Endothelial cell of umbilical vein (primary cell): ENCODE measurements at regions of chr15 and their contacts with region 1.

Region 1: DNA sequence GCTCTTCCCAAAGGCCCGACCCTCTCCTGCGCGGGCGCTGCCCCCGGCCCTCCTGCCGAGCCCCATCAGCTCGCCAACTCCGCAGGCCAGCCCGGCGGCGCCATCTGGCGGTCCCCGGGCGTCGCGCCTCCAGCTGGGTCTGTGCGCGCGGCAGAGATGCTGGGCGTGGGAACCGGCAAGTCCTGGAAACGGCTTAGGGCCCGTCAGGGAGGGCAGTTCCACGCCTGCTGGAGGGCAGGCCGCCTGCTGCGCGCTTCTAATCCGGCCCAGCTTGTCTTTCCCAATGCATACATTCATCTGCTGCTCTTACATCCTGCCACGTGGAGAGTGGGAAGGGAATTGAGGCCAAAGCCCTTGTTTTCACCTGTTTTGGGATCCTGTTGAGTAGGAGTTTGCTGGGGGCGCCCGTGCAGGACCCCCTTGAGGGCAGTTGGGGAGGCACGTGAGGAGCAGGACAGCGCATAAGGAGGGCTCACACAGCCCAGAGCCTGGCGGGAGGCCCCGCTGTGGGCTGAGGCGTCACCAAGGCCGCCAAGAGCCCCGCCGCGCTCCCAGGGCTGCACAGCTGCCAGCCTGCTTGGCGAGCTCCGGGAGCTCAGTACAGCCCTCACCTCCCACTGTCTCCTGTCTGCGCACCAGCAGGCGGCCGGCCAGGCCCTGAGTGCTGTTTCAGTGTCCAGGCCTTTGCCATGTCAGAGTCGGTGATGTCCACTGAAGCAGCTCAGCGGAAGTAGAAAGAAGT is 165.6 kb downstream of the NSMCE3 start:
- DNase-seq: peak; percentile 79
- H3K4me3 ChIP-seq: peak overlapping the region in 2 of 3 experiments; percentile 18 to 32
- H3K27ac ChIP-seq: no peak overlapping the region
- H3K4me1 ChIP-seq: no peaks in the 10 kb centered on the region
- H3K27me3 ChIP-seq: no peaks in the 10 kb centered on the region
- CTCF ChIP-seq: peak; percentile 93 to 96
- POLR2A ChIP-seq: no peak

Region 2: GRCh38 chr15:28123408-28124023 is 980.5 kb before region 1 on chr15:
- CTCF ChIA-PET with region 1: interaction called, 11 read pairs
- POLR2A ChIA-PET with region 1: no interaction called
- dilution Hi-C with region 1: no loop called
- intact Hi-C with region 1: no loop called
- DNase-seq: peak; percentile 75
- H3K4me3 ChIP-seq: no peak overlapping the region
- H3K27ac ChIP-seq: no peak overlapping the region
- H3K4me1 ChIP-seq: no peaks in the 10 kb centered on the region
- H3K27me3 ChIP-seq: no peaks in the 10 kb centered on the region
- CTCF ChIP-seq: peak; percentile 69 to 71
- POLR2A ChIP-seq: no peak

Region 3: DNA sequence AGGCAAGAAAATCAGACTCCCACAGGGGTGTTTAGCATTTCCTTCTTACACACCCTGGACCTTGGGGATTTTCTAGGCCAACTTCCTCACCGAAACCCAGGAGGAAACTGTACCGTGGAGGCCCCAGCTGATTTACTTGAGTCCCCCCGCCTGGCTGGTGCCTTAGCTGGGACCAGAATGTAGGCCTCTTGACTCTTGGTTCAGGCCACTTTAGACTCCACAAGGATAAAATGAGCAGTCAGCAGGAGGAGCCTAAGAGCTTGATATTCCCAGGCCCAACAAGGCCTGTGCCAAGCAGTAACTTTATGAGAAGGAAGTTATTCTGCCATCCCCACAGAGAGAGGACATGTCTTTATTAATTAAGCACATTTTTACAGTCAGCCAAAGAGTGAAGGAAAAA is 222.8 kb before region 1 on chr15:
- CTCF ChIA-PET with region 1: no interaction called
- POLR2A ChIA-PET with region 1: no interaction called
- dilution Hi-C with region 1: no loop called
- intact Hi-C with region 1: loop called (anchors 5 kb)
- DNase-seq: no peak
- H3K4me3 ChIP-seq: no peak overlapping the region
- H3K27ac ChIP-seq: no peak overlapping the region
- H3K4me1 ChIP-seq: no peaks in the 10 kb centered on the region
- H3K27me3 ChIP-seq: peaks cover 0 to 2% of the 10 kb centered on the region in 2 experiments
- CTCF ChIP-seq: no peak
- POLR2A ChIP-seq: no peak

Region 4: DNA sequence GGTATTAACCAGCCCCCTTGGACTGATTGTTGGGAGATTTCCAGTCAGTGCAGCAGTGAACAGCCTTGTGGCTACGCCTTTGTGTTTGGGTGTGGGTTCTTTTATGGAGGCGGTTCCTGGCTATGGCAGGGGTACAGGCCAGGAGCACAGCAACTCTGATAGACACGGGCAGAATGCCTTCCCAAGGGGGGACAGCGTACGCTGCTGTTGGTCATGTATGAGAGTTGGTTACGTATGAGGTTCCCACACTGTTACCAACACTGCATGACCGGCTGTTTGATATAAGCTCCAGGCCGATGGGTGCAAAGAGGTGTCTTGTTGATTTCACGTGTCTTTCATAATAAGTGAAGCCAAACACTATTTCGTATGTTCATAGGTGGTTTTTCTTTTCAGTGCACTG is 22.2 kb before region 1 on chr15:
- CTCF ChIA-PET with region 1: interaction called, 11 read pairs
- POLR2A ChIA-PET with region 1: no interaction called
- dilution Hi-C with region 1: no loop called
- intact Hi-C with region 1: no loop called
- DNase-seq: no peak
- H3K4me3 ChIP-seq: no peak overlapping the region
- H3K27ac ChIP-seq: no peak overlapping the region
- H3K4me1 ChIP-seq: no peaks in the 10 kb centered on the region
- H3K27me3 ChIP-seq: no peaks in the 10 kb centered on the region
- CTCF ChIP-seq: no peak
- POLR2A ChIP-seq: no peak

Region 5: DNA sequence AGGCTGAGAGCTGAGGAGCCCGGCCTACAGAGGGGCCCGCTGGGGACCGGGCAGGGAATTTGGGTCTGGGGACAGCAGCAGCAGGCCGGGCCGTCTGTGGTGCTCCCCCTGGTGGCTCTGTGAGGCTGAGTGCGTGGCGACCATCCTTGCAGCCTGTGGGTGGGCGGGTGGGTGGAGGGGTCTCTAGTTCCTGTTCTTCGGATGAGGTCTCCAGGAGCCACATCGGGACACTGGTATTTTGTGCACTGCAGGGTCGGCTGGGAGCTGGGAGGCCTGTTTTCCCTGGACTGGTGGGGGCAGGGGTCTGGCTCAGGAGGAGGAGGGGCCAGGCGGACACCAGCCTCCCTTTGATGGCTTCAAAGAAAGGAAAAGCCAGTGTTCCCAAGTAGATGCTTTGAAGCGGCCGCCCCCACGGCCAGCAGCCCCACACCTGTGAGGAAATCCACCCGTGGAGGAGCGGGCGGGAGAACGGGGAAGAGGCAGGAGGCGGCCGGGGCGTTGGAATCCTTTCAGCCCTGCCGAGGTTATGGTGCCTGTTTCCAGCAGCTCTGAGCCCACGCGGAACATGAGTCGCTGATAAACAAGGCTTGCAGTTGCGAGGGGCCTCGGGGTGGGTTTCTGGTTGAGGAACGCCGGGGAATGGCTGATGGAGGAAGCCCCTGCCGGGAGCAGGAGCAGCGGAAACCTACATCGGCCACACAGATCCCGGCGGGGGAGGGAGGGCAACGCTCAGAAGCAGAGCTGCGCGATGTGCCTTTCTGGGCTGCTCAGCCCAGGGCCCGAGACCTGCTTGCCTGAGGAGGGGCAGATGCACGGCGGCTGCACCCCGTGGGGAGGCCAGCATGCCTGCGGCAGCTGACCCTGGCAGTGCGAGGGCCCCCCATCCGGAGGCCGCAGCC is 11.3 kb after region 1 on chr15:
- CTCF ChIA-PET with region 1: interaction called, 49 read pairs
- POLR2A ChIA-PET with region 1: no interaction called
- dilution Hi-C with region 1: no loop called
- intact Hi-C with region 1: no loop called
- DNase-seq: peak; percentile 17
- H3K4me3 ChIP-seq: peak overlapping the region in 2 of 3 experiments; percentile 3 to 34
- H3K27ac ChIP-seq: no peak overlapping the region
- H3K4me1 ChIP-seq: no peaks in the 10 kb centered on the region
- H3K27me3 ChIP-seq: no peaks in the 10 kb centered on the region
- CTCF ChIP-seq: peak; percentile 21 to 78
- POLR2A ChIP-seq: no peak

Region 6: GRCh38 chr15:29131840-29132420 is 27.9 kb after region 1 on chr15:
- CTCF ChIA-PET with region 1: interaction called, 14 read pairs
- POLR2A ChIA-PET with region 1: no interaction called
- dilution Hi-C with region 1: no loop called
- intact Hi-C with region 1: loop called (anchors 2 kb)
- DNase-seq: no peak
- H3K4me3 ChIP-seq: no peak overlapping the region
- H3K27ac ChIP-seq: no peak overlapping the region
- H3K4me1 ChIP-seq: peaks cover 6% of the 10 kb centered on the region
- H3K27me3 ChIP-seq: no peaks in the 10 kb centered on the region
- CTCF ChIP-seq: no peak
- POLR2A ChIP-seq: no peak